A673 (cell line): ENCODE measurements at regions of chr7 and their contacts with region 1.

Region 1: GRCh38 chr7:83921941-83922607 is 272.5 kb downstream of the SEMA3A start:
- DNase-seq: peak; percentile 4
- H3K4me3 ChIP-seq: no peak overlapping the region
- H3K27ac ChIP-seq: no peak overlapping the region
- H3K4me1 ChIP-seq: no peaks in the 10 kb centered on the region
- H3K27me3 ChIP-seq: no peaks in the 10 kb centered on the region
- CTCF ChIP-seq: no peak

Region 2: DNA sequence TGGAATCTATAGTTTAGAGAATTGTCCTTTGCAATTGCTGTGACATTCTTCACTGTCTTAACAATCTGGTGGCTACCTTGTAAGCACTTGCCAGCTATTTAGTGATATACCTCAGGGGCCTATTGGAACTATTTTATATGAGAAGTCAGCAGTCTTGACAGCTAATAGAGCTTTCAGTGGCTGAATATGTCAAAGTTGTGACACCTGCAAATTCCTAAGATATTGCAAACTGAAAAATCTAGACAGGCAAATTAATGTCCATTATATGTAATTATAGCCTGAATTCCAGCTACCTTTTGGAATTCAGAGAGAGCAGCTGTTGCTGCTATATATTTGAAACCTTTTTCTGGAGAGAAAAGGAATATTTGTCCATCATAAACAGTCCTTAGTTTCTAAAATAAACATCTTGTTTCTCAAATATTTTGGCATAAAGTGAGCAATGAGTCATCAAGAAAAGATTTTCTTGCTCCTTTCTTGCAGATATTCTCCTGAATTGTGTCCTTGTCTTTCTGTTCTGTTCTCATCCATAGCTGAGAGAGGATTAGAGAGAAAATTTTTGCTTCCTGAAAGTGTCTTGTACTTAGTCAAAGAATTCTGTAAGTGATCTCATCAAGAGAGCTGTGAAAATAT is 1673.7 kb after region 1 on chr7:
- CTCF ChIA-PET with region 1: no interaction called
- POLR2A ChIA-PET with region 1: interaction called, 11 read pairs
- intact Hi-C with region 1: no loop called
- DNase-seq: no peak
- H3K4me3 ChIP-seq: no peak overlapping the region
- H3K27ac ChIP-seq: no peak overlapping the region
- H3K4me1 ChIP-seq: no peaks in the 10 kb centered on the region
- H3K27me3 ChIP-seq: no peaks in the 10 kb centered on the region
- CTCF ChIP-seq: no peak

Region 3: DNA sequence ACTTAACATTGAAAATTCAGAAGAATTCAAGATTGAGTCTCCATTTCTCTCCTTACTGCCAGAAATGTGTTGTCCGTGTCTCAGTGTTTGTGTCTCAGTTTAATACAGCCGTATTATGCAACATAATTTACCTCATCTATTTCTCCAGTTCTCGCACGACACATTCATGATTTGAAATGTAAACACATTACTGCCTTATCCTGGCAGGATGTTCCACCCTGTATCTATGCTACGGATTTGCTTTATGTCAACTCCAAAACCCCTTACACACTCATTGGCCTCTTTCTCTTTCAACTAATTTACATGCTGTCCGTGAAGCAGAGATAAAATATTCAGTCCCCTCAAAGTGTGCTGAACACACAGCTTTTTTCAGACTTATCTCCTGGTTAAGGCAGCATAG is 1918.5 kb after region 1 on chr7:
- CTCF ChIA-PET with region 1: no interaction called
- POLR2A ChIA-PET with region 1: no interaction called
- intact Hi-C with region 1: loop called (anchors 10 kb)
- DNase-seq: no peak
- H3K4me3 ChIP-seq: no peak overlapping the region
- H3K27ac ChIP-seq: no peak overlapping the region
- H3K4me1 ChIP-seq: no peaks in the 10 kb centered on the region
- H3K27me3 ChIP-seq: no peaks in the 10 kb centered on the region
- CTCF ChIP-seq: no peak